Right ventricle myocardium inferior (tissue), 1 donor: ENCODE measurements at regions of chr1 and their contacts with region 1.

Region 1: GRCh38 chr1:61043010-61043820 is 39.1 kb upstream of the NFIA start:
- DNase-seq: peak; percentile 94
- ATAC-seq: peak; percentile 95

Region 2: GRCh38 chr1:59971464-59971911 is 1071.7 kb before region 1 on chr1:
- intact Hi-C with region 1: loop called (anchors 5 kb)
- DNase-seq: peak; percentile 80
- ATAC-seq: peak; percentile 72

Region 3: GRCh38 chr1:60848583-60849188 is 194.5 kb before region 1 on chr1:
- intact Hi-C with region 1: loop called (anchors 1 kb)
- DNase-seq: no peak
- ATAC-seq: no peak

Region 4: DNA sequence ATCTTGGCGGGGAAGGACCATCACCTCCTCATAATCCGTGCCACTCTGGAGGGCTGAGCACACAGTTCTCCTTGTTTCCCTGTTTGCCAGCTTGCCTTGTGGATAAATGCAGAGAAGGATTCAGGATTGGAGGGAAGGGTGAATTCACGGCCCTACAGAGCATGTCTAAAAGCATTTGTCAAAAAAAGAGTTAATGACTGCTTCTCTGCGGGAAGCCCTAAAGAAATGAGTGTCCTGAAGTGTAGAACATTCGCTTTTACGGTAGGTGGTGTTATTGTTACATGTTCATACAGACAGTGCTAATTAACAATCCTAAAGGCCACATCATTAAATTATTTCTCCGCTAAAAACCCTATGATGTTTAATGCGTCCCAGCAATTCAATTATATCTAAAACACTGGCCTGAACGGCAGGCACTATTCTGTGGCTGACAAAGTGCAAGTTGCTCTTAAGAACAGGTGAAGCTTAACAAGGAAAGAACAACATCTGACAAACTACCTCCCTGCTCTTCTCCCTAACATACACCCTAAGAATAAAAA is 73.2 kb before region 1 on chr1:
- intact Hi-C with region 1: loop called (anchors 1 kb)
- DNase-seq: no peak
- ATAC-seq: peak; percentile 69

Region 5: DNA sequence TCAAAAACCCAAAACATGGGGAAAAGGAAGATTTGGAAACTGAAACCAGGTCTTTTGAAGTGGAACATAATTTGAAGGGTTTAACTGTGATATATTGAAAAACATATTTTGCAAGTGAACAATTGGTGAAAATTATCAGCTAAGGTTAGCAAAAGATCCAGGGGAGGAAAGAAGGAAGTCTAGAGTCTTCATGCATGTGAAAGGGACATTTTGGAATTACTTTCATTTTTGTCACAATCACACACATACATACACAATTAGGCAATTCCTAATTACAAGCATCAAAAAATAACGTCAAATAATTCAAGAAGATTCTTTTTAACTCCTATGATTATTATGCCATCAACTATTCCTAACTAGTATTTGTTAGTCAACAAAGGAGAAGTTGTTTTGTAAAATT is 25.6 kb before region 1 on chr1:
- intact Hi-C with region 1: loop called (anchors 2 kb)
- DNase-seq: no peak
- ATAC-seq: no peak

Region 6: GRCh38 chr1:61170328-61171238 is 127.4 kb after region 1 on chr1:
- intact Hi-C with region 1: no loop called
- DNase-seq: no peak
- ATAC-seq: peak; percentile 51